ENCODE measurements at regions of chr19 and their contacts with region 1.

Region 1: DNA sequence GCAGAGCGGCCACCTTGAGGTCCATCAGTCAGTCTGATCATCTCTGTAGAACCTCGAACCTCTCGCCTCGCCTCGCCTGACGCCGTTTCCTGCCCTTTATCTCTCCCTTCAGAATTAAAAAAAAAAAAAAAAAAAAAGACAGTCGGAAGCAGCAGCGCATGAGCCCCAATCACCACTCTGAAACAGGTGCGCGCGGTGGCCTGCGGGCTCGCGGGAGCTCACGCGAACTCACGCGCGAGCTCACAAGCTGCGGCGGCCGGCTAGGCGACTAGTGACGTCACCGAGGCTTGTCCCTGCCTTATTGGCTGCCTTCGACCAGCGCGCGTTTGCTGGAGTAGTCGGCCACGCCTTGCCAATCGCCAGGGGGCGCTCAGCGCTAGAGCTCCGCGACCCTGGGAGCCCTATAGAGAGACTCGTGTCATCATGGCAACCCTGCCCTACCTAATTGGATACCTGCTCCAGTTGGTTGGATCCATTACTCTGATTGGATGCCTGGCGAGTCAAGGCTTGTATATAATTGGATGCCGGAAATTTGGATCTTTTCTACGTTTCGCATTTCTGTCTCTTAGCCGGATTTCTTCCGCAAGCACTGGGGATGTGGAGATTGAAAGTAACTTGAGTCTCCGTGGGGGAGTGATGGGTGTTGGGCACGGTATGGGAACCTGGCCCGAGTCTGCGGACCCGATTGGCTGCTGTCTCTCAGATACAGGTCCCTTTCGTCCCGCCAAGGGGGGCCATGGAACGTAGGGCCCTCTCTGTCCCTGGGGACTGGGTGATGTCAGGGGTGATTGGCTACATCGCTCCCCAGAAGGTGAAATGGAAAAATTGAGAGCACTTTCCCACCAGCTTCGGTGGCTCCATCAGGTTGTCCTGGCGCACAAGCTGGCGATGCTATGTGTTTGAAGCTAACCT is 31.6 kb downstream of the SYT3 start:
- DNase-seq: peak; percentile 81
- H3K4me3 Mint-ChIP-seq: no peak overlapping the region
- H3K27ac Mint-ChIP-seq: peak overlapping the region; percentile 13
- H3K4me1 Mint-ChIP-seq: peaks cover 16% of the 10 kb centered on the region
- H3K27me3 Mint-ChIP-seq: peaks cover 15% of the 10 kb centered on the region

Region 2: GRCh38 chr19:50779504-50780457 is 171.7 kb after region 1 on chr19:
- CTCF ChIA-PET with region 1: no interaction called
- POLR2A ChIA-PET with region 1: interaction called, 10 read pairs
- DNase-seq: no peak
- H3K4me3 Mint-ChIP-seq: no peak overlapping the region
- H3K27ac Mint-ChIP-seq: no peak overlapping the region
- H3K4me1 Mint-ChIP-seq: peaks cover 11% of the 10 kb centered on the region
- H3K27me3 Mint-ChIP-seq: peaks cover 49% of the 10 kb centered on the region

Measured in activated CD4-positive, alpha-beta T cell treated with anti-CD3 and anti-CD28 coated beads, Interleukin-2, amount 10 ng/mL, durations not matched to agents 7 days and 5 days (primary cell).